ENCODE measurements at regions of chr1 and their contacts with region 1.

Region 1: GRCh38 chr1:108708691-108709660 is 3.7 kb upstream of the FNDC7 start:
- DNase-seq: peak; percentile 75
- H3K4me3 Mint-ChIP-seq: no peak overlapping the region
- H3K27ac Mint-ChIP-seq: no peak overlapping the region
- H3K4me1 Mint-ChIP-seq: peaks cover 26% of the 10 kb centered on the region
- H3K27me3 Mint-ChIP-seq: peaks cover 22% of the 10 kb centered on the region

Region 2: GRCh38 chr1:108691942-108692723 is 16.8 kb before region 1 on chr1 and contains the start of gene PRPF38B:
- CTCF ChIA-PET with region 1: interaction called, 13 read pairs
- DNase-seq: peak; percentile 97
- H3K4me3 Mint-ChIP-seq: peak within 1 kb of the TSS; percentile 94
- H3K27ac Mint-ChIP-seq: peak within 1 kb of the TSS; percentile 98
- H3K4me1 Mint-ChIP-seq: peaks cover 40% of the 10 kb centered on the region
- H3K27me3 Mint-ChIP-seq: peaks cover 7% of the 10 kb centered on the region